OCI-LY7 (cell line): ENCODE measurements at regions of chr18 and their contacts with region 1.

Region 1: DNA sequence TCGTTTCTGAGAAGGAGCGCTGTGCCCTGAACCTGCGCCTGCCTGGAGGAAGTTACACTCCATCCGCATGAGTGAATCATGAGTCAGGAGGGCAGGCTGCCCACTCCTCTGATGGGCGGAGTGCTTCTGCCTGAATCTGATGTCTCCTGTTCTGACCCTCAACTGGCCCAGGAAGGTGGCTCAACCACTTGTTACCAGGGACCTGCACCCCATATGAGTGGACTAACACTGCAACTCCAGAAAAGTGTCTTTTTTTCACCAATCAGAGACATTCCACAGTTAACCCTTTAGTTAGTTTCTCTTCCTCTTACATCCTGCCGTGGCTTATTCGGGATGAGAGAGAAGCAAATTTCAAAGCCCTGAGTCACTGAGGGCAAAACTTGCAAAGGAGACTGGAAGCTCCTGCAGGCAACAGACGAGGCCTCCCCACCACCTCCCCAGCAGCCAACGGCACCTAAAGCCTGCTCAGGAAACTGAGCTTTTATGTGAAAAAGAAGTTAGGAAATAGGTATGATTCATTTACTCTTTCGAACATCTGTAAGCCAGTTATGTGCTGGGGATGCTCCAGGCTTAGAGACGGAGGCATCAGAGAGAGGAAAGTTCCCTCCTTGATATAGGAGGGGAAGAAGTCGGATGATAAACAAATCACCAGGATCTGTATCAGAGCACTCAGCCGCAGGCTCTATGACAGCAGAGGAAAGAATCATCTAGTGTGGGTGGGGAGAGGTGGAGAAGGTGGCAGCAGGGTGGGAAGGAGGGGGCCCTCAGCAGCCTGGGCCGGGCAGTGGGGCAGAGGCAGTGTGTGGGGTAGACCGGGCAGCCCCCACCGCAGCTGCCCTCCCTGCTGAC is 30.9 kb downstream of the MBP start:
- DNase-seq: peak; percentile 44
- H3K4me3 ChIP-seq: peak overlapping the region; percentile 46
- H3K27ac ChIP-seq: peak overlapping the region; percentile 91
- H3K4me1 ChIP-seq: peaks cover 84% of the 10 kb centered on the region
- CTCF ChIP-seq: no peak

Region 2: GRCh38 chr18:77016936-77017335 is 84.7 kb before region 1 on chr18:
- CTCF ChIA-PET with region 1: no interaction called
- POLR2A ChIA-PET with region 1: no interaction called
- intact Hi-C with region 1: no loop called
- DNase-seq: no peak
- H3K4me3 ChIP-seq: no peak overlapping the region
- H3K27ac ChIP-seq: no peak overlapping the region
- H3K4me1 ChIP-seq: no peaks in the 10 kb centered on the region
- CTCF ChIP-seq: no peak

Region 3: DNA sequence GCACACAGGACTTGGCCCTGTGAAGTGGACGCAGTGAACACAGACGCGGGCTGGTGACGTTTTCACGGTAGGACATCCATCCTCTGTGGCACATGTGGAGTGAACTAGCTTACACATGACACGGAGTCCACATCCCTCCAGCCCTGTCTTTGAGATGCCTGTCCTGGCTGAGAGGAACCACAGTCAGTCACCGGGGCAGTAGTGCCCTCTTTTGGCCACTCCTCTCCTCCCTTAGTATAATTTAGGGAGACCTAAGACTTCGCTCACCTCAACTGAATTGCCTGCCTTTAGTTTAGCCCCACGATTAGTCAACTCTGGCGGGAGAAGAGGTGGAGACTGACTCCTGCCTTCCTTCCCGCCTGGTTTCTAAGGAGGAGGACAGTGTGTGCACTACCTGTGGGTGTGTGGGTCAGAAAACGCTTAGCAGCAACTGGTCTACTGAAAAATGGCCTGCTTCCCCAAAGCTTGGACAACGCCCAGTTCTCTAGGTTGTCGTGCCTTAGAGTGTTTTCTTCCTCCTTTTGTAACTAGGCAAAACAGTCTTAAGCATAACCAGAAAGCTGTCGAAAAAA is 39.6 kb before region 1 on chr18:
- CTCF ChIA-PET with region 1: no interaction called
- POLR2A ChIA-PET with region 1: no interaction called
- intact Hi-C with region 1: loop called (anchors 2 kb)
- DNase-seq: peak; percentile 54
- H3K4me3 ChIP-seq: peak overlapping the region; percentile 8
- H3K27ac ChIP-seq: peak overlapping the region; percentile 96
- H3K4me1 ChIP-seq: peaks cover 54% of the 10 kb centered on the region
- CTCF ChIP-seq: peak; percentile 60

Region 4: DNA sequence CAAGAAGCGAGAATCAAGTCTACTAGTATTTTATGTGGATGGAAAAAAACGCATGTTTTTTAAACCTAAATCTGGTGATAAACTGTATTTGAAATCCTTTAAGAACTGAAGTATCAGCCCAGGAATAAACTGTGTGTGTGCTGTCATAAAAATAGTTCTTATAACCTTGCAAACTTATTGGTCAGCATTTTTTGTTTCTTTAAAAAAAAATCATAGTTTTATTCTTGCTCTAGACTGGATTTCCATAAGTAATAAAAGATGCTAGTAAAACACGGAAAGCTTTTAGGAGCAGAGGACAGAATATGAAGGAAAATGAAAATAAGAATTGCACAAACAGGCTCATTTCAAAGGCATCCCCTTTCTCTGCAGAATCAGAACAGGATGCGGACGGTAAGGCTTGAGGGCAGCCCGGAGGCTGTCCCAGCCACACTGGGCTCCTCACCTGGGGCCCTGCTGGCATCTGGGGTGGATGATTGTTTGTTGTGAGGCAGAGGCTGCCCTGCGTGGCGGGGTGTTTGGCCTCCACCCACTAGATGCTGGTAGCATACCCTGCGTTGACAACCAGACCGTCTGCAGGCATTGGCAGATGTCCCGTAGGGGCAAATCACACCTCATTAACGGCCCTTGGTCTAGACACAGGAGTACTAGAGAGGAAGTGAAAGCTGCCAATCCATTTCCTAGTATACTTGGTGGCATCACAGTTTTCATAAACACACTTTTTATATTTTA is 21.5 kb before region 1 on chr18:
- CTCF ChIA-PET with region 1: no interaction called
- POLR2A ChIA-PET with region 1: interaction called, 4 read pairs
- intact Hi-C with region 1: loop called (anchors 2 kb)
- DNase-seq: peak; percentile 60
- H3K4me3 ChIP-seq: peak overlapping the region; percentile 32
- H3K27ac ChIP-seq: peak overlapping the region; percentile 46
- H3K4me1 ChIP-seq: peaks cover 21% of the 10 kb centered on the region
- CTCF ChIP-seq: no peak

Region 5: GRCh38 chr18:77124452-77124922 is 22.9 kb after region 1 on chr18:
- CTCF ChIA-PET with region 1: no interaction called
- POLR2A ChIA-PET with region 1: interaction called, 10 read pairs
- intact Hi-C with region 1: loop called (anchors 1 kb)
- DNase-seq: peak; percentile 49
- H3K4me3 ChIP-seq: peak overlapping the region; percentile 57
- H3K27ac ChIP-seq: peak overlapping the region; percentile 69
- H3K4me1 ChIP-seq: peaks cover 92% of the 10 kb centered on the region
- CTCF ChIP-seq: no peak

Region 6: DNA sequence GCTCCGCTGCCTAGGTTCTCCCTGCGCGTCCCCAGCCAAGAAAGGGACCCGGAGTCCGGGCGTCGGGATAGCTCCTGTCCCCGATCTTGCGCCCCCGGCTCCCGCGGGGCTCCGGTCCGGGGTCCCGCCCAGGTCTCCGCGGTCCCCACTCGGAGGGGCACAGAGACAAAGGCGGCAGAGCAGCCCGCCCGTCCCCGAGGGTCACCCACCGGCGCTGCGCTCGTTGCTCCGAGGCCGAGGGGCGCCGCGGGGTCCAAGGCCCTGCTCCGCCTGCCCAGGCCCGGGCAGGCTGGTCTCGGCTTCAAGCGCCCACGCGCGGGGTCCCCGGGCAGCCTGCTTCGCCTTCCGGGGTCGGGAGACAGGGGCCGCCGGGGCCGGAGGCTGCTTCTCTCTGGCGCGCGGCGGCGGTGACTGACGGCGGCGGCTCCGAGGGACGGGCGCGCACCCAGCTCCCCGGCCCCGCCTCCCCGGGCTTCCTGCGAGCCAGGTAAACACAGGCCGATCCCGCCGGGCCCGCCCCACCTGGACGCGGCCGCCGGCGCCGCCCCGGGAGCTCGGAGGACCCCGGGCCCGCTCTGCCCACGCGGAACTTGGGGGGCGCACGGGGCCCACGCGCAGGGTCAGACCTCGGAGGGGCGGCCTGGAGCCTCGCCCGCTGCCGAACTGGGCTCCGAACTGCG is 30.9 kb after region 1 on chr18 and contains the start of gene MBP:
- CTCF ChIA-PET with region 1: no interaction called
- POLR2A ChIA-PET with region 1: interaction called, 7 read pairs
- intact Hi-C with region 1: loop called (anchors 5 kb)
- DNase-seq: peak; percentile 68
- H3K4me3 ChIP-seq: peak within 1 kb of the TSS; percentile 87
- H3K27ac ChIP-seq: peak within 1 kb of the TSS; percentile 11
- H3K4me1 ChIP-seq: peaks cover 40% of the 10 kb centered on the region
- CTCF ChIP-seq: no peak
- total RNA-seq, gene MBP: 13.5 and 16.4 TPM in 2 replicates

Region 7: GRCh38 chr18:77157312-77157711 is 55.7 kb after region 1 on chr18:
- CTCF ChIA-PET with region 1: no interaction called
- POLR2A ChIA-PET with region 1: no interaction called
- intact Hi-C with region 1: no loop called
- DNase-seq: no peak
- H3K4me3 ChIP-seq: no peak overlapping the region
- H3K27ac ChIP-seq: no peak overlapping the region
- H3K4me1 ChIP-seq: peaks cover 9% of the 10 kb centered on the region
- CTCF ChIP-seq: no peak